SK-N-SH (cell line): ENCODE measurements at regions of chr5 and their contacts with region 1.

Region 1: GRCh38 chr5:137619191-137619870 is 116.6 kb downstream of the KLHL3 start:
- DNase-seq: peak; percentile 86
- H3K4me3 ChIP-seq: peak overlapping the region in 1 of 2 experiments; percentile 23; a peak in 1 of 4 replicates
- H3K27ac ChIP-seq: peak overlapping the region; percentile 69 to 83
- H3K4me1 ChIP-seq: peaks cover 16 to 27% of the 10 kb centered on the region in 2 experiments; a peak in 3 of 4 replicates
- H3K27me3 ChIP-seq: no peaks in the 10 kb centered on the region
- CTCF ChIP-seq: no peak
- EP300 ChIP-seq: peak in 1 of 2 experiments; percentile 81; a peak in 2 of 4 replicates
- RAD21 ChIP-seq: no peak; the same call in 1 of the 2 replicates

Region 2: GRCh38 chr5:137589185-137589584 is 30.1 kb before region 1 on chr5:
- CTCF ChIA-PET with region 1: no interaction called
- POLR2A ChIA-PET with region 1: no interaction called
- DNase-seq: no peak
- H3K4me3 ChIP-seq: no peak overlapping the region
- H3K27ac ChIP-seq: no peak overlapping the region
- H3K4me1 ChIP-seq: no peaks in the 10 kb centered on the region
- H3K27me3 ChIP-seq: no peaks in the 10 kb centered on the region; the same call in 1 of the 2 replicates
- CTCF ChIP-seq: no peak
- EP300 ChIP-seq: no peak
- RAD21 ChIP-seq: no peak

Region 3: DNA sequence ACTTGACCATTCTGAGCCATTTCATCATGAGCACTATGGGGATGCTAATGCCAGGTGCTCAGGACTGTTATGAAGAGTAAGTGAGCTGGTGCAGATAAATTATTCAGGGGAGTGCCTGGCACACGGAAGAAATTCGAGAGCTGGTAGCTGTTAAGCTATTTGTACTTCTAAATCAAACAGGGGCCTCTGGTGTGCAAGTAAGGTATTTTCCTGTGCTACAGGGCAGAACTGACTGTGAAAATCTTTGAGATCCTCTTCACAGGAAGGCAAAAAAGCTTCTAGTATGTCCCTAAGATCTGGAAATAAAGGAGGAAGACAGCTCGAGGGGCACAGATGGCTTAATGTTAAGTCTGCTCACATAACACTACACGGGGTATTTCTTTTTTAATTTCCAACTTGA is 13.9 kb before region 1 on chr5:
- CTCF ChIA-PET with region 1: interaction called, 13 read pairs
- POLR2A ChIA-PET with region 1: no interaction called
- DNase-seq: no peak
- H3K4me3 ChIP-seq: no peak overlapping the region
- H3K27ac ChIP-seq: no peak overlapping the region
- H3K4me1 ChIP-seq: peaks cover 0 to 32% of the 10 kb centered on the region in 2 experiments; a peak in 2 of 4 replicates
- H3K27me3 ChIP-seq: peaks cover 40% of the 10 kb centered on the region
- CTCF ChIP-seq: peak; percentile 27; the same call in 1 of the 2 replicates
- EP300 ChIP-seq: no peak
- RAD21 ChIP-seq: peak; percentile 56

Region 4: DNA sequence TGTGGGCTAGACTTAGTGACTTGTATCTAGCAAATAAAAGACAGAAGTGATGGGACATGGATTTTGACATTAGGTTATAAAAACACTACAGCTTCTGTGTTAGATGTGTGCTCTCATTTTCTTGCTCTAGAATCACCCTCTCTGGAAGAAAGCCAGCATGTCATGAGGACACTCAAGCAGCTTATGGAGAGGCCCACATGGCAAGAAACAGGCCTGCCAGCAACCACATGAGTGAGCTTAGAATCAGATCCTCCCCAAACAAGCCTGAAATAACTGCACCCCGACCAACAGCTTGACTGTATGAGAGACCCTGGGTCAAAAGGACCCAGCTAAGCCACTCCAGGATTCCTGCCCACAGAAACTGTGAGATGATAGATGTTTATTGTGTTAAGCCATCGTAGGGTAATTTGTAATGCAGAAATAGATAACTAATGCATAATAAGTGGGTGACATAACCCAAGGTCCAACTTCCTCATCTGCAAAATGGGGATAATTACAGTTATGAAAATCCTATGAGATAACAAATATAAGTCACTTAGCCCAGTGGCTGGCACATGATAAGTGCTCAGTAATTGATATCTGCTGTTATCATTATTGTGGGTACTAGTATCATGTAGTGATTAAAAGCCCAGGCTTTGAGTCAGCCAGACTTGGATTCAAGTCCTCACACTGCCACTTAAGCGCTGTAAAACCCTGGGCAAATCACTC is 30.1 kb after region 1 on chr5:
- CTCF ChIA-PET with region 1: no interaction called
- POLR2A ChIA-PET with region 1: no interaction called
- DNase-seq: no peak
- H3K4me3 ChIP-seq: no peak overlapping the region
- H3K27ac ChIP-seq: no peak overlapping the region
- H3K4me1 ChIP-seq: peaks cover 0 to 8% of the 10 kb centered on the region in 2 experiments; a peak in 1 of 4 replicates
- H3K27me3 ChIP-seq: no peaks in the 10 kb centered on the region
- CTCF ChIP-seq: no peak
- EP300 ChIP-seq: no peak
- RAD21 ChIP-seq: no peak